Endothelial cell of umbilical vein (primary cell): ENCODE measurements at regions of chr10 and their contacts with region 1.

Region 1: DNA sequence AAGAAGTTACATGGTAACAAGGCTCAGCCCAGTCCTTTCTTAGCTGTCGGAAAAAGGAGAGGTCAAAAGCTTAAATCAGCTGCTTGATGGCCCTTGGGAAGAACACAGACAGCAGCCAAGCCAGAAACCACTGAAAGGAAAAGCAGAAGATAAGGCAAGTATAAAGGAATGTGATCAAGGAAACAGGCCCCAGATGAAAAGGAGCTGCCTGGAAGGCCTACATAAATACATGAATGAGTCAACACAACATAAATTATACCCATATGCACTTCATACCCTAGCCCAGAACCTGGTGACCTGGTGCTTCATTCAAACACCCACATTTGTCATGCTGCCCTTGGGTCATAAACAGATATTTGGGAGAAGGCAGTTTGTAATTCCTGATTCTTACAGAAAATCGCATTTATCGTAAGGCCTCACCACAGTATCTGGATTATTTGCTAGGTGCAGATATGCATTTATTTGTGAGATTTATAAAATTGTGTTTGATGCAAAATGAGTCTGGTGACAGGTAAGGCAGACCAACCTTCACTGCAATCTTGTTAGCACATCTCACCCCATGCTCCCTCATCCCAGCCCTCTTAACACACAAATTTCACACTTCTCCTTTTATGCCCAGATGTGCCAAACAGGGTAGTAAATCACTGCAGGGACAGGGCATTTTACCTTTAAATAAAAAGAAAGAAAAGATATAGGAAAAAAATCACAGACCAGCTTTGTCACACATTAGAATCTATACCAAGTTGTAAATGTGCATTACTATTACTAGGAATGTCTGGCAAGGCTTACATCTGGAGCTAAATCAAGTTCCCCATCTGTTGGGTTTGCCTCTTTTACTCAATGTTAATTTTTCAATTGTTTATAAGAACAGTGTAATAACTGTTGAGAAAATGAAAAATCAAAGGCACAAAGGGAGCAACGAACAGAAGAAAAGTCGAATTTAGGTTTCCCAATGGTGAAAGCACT is 95.0 kb upstream of the KCNIP2 start:
- DNase-seq: peak; percentile 97
- H3K4me3 ChIP-seq: no peak overlapping the region
- H3K27ac ChIP-seq: peak overlapping the region; percentile 92
- H3K4me1 ChIP-seq: peaks cover 49% of the 10 kb centered on the region
- H3K27me3 ChIP-seq: no peaks in the 10 kb centered on the region
- CTCF ChIP-seq: no peak
- POLR2A ChIP-seq: peak; percentile 53

Region 2: DNA sequence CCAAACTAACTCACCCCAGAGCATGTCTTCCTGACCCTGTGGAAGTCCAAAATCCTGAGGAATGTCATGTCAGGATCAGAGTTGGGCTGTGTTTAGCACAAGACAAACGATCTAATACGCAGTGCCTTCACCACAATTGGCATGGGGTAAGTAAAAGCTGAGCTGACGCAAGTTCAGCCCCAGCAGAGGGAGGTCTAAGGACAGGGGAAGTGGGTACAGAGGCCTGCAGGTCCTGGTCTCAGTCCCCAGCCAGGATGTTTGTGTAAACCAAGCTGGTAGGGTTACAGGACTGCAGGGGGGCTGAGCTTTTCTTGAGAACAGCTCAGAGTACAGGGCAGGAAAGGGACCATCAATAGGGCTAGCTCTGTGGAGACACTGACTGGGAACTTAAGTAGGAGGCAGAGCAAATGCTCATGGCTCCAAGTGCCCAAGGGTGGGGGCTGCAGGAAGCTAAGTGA is 89.7 kb before region 1 on chr10:
- CTCF ChIA-PET with region 1: interaction called, 5 read pairs
- POLR2A ChIA-PET with region 1: interaction called, 3 read pairs
- dilution Hi-C with region 1: no loop called
- intact Hi-C with region 1: loop called (anchors 5 kb)
- DNase-seq: no peak
- H3K4me3 ChIP-seq: no peak overlapping the region
- H3K27ac ChIP-seq: peak overlapping the region; percentile 71
- H3K4me1 ChIP-seq: peaks cover 26% of the 10 kb centered on the region
- H3K27me3 ChIP-seq: no peaks in the 10 kb centered on the region
- CTCF ChIP-seq: no peak
- POLR2A ChIP-seq: no peak

Region 3: DNA sequence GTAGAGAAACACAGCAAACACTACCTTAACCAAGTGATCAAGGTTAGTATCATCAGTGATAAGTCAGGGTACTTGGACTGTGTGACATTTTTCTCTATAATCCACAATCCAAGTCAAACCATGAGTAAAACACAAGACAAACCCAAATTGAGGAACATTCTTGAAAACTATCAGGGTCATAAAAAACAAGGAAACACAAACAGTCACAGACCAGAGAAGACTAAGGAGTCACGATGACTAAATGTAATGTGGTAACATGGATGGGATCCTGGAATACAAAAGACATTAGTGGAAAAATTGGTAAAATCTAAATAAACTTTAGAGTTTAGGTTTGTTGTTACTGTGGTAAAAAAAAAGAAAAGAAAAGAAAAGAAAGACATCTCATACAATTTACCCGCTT is 13.6 kb after region 1 on chr10:
- CTCF ChIA-PET with region 1: interaction called, 12 read pairs
- POLR2A ChIA-PET with region 1: no interaction called
- dilution Hi-C with region 1: no loop called
- intact Hi-C with region 1: no loop called
- DNase-seq: no peak
- H3K4me3 ChIP-seq: no peak overlapping the region
- H3K27ac ChIP-seq: no peak overlapping the region
- H3K4me1 ChIP-seq: no peaks in the 10 kb centered on the region
- H3K27me3 ChIP-seq: no peaks in the 10 kb centered on the region
- CTCF ChIP-seq: no peak
- POLR2A ChIP-seq: no peak

Region 4: DNA sequence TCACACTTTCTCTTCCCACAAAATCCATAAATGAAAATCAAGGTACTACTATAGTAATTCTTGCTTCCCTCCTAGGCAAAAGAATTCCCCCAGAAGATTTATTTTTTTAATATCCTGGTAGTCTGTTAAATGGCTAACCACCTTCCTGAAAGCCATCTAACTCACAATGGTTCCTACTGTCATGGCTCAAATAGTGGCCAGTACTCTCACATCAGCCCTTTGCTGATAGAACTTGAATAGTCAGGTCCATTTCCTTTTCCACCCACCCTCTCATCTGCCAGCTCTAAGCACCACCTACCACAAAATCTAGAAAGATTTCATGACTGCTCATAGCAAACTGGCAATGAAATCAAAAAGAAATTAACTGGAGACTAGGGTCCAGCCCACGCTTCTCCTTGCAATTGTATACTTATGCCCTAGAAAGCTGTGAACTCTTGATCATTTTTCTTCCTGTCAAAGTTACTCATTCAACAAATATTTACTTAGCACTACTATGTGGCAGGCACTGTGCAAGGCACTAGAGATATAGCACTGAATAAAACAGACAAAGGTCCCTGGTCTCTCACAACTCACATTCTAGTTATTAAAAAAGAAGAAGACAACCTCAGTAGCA is 57.0 kb after region 1 on chr10:
- CTCF ChIA-PET with region 1: interaction called, 9 read pairs
- POLR2A ChIA-PET with region 1: no interaction called
- dilution Hi-C with region 1: no loop called
- intact Hi-C with region 1: loop called (anchors 5 kb)
- DNase-seq: peak; percentile 52
- H3K4me3 ChIP-seq: no peak overlapping the region
- H3K27ac ChIP-seq: no peak overlapping the region
- H3K4me1 ChIP-seq: peaks cover 11% of the 10 kb centered on the region
- H3K27me3 ChIP-seq: no peaks in the 10 kb centered on the region
- CTCF ChIP-seq: no peak
- POLR2A ChIP-seq: no peak